Prostate gland (tissue), 2 donors: ENCODE measurements at regions of chr10 and their contacts with region 1.

Region 1: DNA sequence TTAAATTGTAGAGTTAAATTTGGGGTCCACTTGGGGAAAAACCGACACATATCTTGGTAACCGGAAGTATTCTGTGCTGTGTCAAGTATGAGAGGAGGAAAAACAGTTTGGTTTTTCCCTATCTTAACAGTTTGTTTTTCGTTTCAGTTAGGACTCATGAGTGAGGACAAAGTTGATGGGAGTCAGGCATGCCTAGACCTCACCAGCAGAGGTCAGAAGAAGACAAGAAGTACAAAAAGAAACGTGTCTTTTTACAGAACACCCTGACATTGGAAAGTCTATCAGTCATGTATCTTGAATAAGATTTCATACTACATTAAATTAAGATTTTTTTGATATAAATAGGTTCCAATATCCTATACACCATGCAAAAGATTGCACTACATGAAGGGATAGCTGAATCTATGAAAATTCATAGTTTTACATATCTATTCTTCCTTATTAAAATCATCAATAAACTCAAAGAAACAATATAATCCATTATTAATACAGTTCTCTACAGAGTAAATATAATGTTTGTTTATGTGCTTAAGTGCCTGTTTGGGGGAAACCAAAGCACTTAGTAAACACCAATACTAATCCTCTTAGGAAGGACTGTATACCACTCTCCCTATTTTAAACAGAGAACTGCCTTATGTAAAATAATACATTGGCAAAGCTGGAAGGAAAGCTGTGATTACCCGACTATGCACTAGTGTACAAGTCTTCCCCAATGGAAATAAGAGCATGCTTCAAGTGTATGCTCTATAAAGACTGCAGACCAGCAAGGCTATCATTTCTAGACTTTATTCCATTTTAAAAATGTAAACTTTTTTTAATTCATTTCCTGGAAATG is 95.6 kb downstream of the USP6NL start:
- DNase-seq: peak; percentile 39
- H3K4me3 ChIP-seq: no peak overlapping the region
- H3K27ac ChIP-seq: no peak overlapping the region
- H3K4me1 ChIP-seq: no peaks in the 10 kb centered on the region
- H3K27me3 ChIP-seq: no peaks in the 10 kb centered on the region
- CTCF ChIP-seq: peak; percentile 67 to 87 (median 80)
- POLR2A ChIP-seq: no peak

Region 2: DNA sequence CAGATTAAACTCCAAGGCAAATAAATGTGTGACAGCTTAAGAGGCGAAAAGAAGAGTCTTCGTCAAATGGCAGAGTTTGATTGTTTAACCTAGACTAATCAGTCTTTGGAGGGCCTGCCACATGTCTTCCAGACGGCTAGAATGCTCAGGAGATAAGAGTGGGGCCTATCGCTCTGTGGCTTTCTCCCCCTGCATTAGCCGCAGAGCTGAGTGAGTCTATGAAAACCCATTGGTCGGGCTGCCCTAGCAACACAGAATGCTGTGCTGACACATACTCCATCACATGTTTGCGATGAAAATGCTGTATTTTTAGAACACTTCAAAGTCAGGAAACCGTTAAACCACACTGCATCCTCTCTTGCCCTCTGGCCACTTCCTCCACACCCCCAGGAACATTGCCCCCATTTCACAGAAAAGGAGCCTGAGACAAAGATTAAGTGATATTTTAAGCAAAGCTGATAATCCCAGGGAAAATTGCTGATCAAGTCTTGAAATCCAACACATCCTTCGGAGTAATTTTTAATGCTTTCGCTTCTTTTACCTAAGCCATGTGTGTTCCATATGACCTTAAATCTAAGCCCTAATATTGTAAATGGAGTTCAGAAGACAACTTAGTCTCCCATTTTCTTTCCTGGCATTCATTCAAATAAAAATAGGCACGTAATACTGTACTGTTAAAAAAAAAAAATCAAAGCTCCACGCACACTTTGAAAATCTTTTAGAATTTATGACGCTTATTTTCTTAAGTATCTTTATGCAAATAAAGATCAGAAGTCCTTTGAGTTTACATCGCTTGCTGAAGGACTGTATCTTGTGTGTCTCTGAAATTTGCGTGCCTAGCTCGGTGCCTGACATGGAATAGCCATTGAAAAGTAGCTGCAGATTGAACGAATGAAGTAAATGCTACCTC is 337.0 kb before region 1 on chr10:
- intact Hi-C with region 1: no loop called
- DNase-seq: no peak
- H3K4me3 ChIP-seq: no peak overlapping the region
- H3K27ac ChIP-seq: no peak overlapping the region
- H3K4me1 ChIP-seq: no peaks in the 10 kb centered on the region
- H3K27me3 ChIP-seq: no peaks in the 10 kb centered on the region
- CTCF ChIP-seq: no peak
- POLR2A ChIP-seq: no peak

Region 3: GRCh38 chr10:11411926-11412545 is 103.8 kb before region 1 on chr10:
- intact Hi-C with region 1: no loop called
- DNase-seq: no peak
- H3K4me3 ChIP-seq: no peak overlapping the region
- H3K27ac ChIP-seq: no peak overlapping the region
- H3K4me1 ChIP-seq: no peaks in the 10 kb centered on the region
- H3K27me3 ChIP-seq: peaks cover 2% of the 10 kb centered on the region
- CTCF ChIP-seq: no peak
- POLR2A ChIP-seq: no peak

Region 4: GRCh38 chr10:11724938-11725776 is 209.3 kb after region 1 on chr10:
- intact Hi-C with region 1: loop called (anchors 1 kb)
- DNase-seq: no peak
- H3K4me3 ChIP-seq: no peak overlapping the region
- H3K27ac ChIP-seq: no peak overlapping the region
- H3K4me1 ChIP-seq: no peaks in the 10 kb centered on the region
- H3K27me3 ChIP-seq: no peaks in the 10 kb centered on the region
- CTCF ChIP-seq: peak in 3 of 4 experiments; percentile 50 to 78 (median 70)
- POLR2A ChIP-seq: no peak

Region 5: GRCh38 chr10:11757821-11758463 is 242.1 kb after region 1 on chr10:
- intact Hi-C with region 1: loop called (anchors 2 kb)
- DNase-seq: peak; percentile 93
- H3K4me3 ChIP-seq: no peak overlapping the region
- H3K27ac ChIP-seq: peak overlapping the region; percentile 44 to 46
- H3K4me1 ChIP-seq: peaks cover 5% of the 10 kb centered on the region
- H3K27me3 ChIP-seq: no peaks in the 10 kb centered on the region
- CTCF ChIP-seq: peak; percentile 72 to 96 (median 90)
- POLR2A ChIP-seq: no peak